Psoas muscle (tissue), 8 donors: ENCODE measurements at regions of chr1 and their contacts with region 1.

Region 1: GRCh38 chr1:170732252-170732588 is 68.3 kb downstream of the PRRX1 start:
- DNase-seq: no peak
- ATAC-seq: peak; percentile 26 to 37 (median 31)
- H3K4me3 ChIP-seq: peak overlapping the region; percentile 48
- H3K27ac ChIP-seq: peak overlapping the region; percentile 97
- H3K4me1 ChIP-seq: peaks cover 68% of the 10 kb centered on the region
- H3K27me3 ChIP-seq: no peaks in the 10 kb centered on the region
- CTCF ChIP-seq: no peak

Region 2: DNA sequence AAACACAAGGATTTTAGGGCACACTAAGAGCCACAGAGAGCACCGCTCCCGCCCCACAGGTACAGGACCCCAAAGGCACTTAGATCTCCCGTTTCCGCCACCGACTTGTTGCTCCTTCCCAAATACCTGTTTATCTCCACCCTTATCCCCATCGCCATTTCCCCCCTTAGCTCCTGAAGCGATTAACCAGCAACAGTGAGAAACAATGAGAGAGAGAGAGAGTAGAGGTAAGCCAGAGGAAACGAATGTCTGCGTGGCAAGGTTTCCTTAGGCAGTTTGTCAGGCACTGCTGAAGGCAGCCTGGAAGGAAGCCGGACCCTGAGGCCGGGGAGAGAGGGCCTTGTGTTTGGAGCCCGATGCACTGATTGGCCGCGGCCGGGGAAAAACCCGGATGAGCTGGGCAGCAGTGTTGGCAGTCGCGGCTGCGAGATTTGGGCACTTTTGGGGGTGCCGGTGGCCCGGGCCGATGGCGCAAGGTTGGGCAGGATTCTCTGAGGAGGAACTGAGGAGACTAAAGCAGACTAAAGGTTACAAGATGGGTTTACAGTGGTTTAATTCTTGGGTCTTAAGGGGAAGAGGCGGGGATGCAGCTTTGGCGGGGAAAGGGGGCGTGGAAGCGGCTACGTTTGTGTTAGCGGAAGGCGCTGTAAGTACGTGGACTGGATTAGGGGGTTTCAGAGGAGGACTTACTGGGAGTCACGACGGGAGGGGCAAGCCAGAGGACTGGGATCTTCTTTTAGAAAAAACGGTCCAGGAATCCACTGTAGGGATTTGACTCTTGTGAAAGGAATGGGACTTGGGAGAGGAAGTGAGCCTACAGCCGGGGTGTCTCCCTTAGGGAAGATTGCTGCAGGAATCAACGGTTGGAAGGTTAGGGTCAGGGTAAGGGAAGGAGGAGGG is 200.2 kb before region 1 on chr1 and contains the start of gene GORAB:
- intact Hi-C with region 1: loop called in 1 of 2 experiments (anchors 10 kb)
- DNase-seq: peak; percentile 93
- ATAC-seq: peak; percentile 98 to 100 (median 98)
- H3K4me3 ChIP-seq: peak within 1 kb of the TSS; percentile 82
- H3K27ac ChIP-seq: peak within 1 kb of the TSS; percentile 94
- H3K4me1 ChIP-seq: peaks cover 9% of the 10 kb centered on the region
- H3K27me3 ChIP-seq: no peaks in the 10 kb centered on the region
- CTCF ChIP-seq: no peak
- total RNA-seq, gene GORAB: 2.3 to 7.8 (median 3.5) TPM

Region 3: GRCh38 chr1:170623171-170623570 is 109.0 kb before region 1 on chr1:
- intact Hi-C with region 1: no loop called
- DNase-seq: no peak
- ATAC-seq: peak in 2 of 4 donors; percentile 42 to 54
- H3K4me3 ChIP-seq: no peak overlapping the region
- H3K27ac ChIP-seq: no peak overlapping the region
- H3K4me1 ChIP-seq: peaks cover 22% of the 10 kb centered on the region
- H3K27me3 ChIP-seq: no peaks in the 10 kb centered on the region
- CTCF ChIP-seq: no peak

Region 4: DNA sequence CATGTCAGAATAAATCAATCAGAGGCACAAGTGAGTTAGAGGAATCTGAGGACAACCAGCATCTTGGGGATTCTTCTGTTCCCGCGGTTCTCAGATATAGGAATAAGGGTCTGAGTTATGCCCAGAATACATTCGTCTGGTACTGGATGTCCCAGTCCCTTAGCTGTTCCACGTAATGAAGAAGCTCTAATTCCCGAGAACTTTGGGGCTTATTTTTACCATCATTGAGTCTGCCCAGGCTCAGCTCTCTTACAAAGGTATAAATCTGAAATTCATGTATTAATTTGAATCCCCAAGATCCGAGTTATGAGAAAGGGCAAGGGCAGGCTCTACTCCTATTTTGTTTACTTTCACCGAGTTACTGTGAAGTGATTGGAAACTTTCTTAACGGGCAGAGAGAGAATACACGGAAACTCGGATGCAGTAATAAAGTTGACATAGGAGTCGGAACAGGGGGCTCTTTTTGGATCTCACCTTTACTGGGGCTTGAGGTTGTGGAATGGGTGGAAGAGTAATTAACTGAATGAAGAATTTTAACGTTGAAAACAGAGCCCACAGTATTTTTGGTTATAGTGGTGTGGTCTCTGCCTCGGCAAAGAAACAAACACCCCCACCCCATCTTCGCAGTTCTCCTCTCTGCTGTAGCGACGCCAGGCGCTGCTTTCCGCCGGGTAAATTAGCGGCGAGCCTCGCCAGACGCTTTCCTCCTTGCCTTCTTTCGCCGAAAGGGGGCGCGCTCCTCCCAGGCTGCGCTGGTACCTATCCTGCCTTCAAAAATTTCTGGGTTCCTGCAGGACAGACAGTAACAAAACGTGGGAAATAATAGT is 61.2 kb before region 1 on chr1:
- intact Hi-C with region 1: loop called in 1 of 2 experiments (anchors 2 kb)
- DNase-seq: peak; percentile 68 to 88
- ATAC-seq: peak in 2 of 4 donors; percentile 15 to 43
- H3K4me3 ChIP-seq: peak overlapping the region; percentile 72
- H3K27ac ChIP-seq: peak overlapping the region; percentile 91
- H3K4me1 ChIP-seq: peaks cover 58% of the 10 kb centered on the region
- H3K27me3 ChIP-seq: peaks cover 0 to 6% (median 2%) of the 10 kb centered on the region in 3 donors
- CTCF ChIP-seq: peak; percentile 52

Region 5: DNA sequence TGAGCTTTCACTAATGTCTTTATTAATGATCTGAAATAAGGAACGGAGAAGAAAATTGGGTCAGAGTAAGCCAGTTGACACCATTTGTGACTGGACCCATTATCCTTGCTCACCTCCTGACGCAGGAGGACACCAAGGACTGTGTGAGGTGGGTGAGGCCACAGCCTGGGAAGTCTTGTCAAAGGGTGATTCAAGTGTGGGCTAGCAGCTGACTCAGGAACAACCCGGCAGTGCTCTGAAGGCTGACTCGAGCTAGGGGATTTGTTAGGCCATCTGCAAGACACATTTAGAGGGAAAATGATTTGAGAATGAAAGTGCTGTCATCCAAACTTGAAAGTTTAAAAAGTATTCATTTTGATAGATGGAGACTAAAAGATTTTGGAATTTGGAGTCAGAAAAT is 47.1 kb before region 1 on chr1:
- intact Hi-C with region 1: loop called (anchors 5 kb)
- DNase-seq: peak in 1 of 2 donors; percentile 54
- ATAC-seq: peak; percentile 45 to 80 (median 56)
- H3K4me3 ChIP-seq: no peak overlapping the region
- H3K27ac ChIP-seq: peak overlapping the region; percentile 61
- H3K4me1 ChIP-seq: peaks cover 54% of the 10 kb centered on the region
- H3K27me3 ChIP-seq: no peaks in the 10 kb centered on the region
- CTCF ChIP-seq: no peak

Region 6: DNA sequence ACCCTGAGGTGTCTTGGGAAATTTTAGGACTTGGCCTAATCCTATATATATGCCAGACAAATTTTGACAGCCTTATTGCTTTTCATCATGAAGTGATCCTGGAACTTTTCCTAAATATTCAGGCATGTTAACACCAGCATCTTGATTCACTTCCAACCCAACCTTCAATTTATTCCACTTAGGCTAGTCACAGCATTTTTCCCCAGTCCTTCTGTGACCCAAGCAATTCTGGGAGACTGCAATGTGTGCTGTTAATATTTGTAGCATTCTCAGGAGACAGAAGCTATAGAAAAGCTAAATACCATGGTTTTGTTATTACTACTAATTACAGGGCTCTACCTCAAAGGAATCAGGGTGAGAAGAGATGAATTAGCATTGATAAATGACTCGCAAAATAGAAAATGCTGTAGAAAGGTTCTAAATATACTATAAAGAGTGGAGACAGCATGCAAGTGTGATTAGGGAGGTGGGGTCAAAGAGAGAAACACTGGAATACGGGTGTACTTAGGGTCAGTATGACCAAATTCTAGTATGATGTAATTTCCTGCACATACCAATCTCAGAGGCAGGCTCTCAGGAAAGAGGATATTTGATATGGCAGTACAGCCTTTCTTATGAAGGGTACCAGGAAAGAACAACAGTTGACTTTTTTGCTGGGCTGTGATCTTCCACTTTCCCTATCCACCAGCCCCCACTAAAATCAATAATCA is 39.2 kb before region 1 on chr1:
- intact Hi-C with region 1: loop called (anchors 5 kb)
- DNase-seq: no peak
- ATAC-seq: peak; percentile 78 to 85 (median 81)
- H3K4me3 ChIP-seq: peak overlapping the region; percentile 32
- H3K27ac ChIP-seq: peak overlapping the region; percentile 82
- H3K4me1 ChIP-seq: peaks cover 71% of the 10 kb centered on the region
- H3K27me3 ChIP-seq: no peaks in the 10 kb centered on the region
- CTCF ChIP-seq: no peak

Region 7: GRCh38 chr1:171081314-171081753 is 349.1 kb after region 1 on chr1:
- intact Hi-C with region 1: no loop called
- DNase-seq: no peak
- ATAC-seq: no peak
- H3K4me3 ChIP-seq: no peak overlapping the region
- H3K27ac ChIP-seq: peak overlapping the region; percentile 12
- H3K4me1 ChIP-seq: no peaks in the 10 kb centered on the region
- H3K27me3 ChIP-seq: no peaks in the 10 kb centered on the region
- CTCF ChIP-seq: peak; percentile 35